ENCODE measurements at regions of chr3 and their contacts with region 1.

Region 1: DNA sequence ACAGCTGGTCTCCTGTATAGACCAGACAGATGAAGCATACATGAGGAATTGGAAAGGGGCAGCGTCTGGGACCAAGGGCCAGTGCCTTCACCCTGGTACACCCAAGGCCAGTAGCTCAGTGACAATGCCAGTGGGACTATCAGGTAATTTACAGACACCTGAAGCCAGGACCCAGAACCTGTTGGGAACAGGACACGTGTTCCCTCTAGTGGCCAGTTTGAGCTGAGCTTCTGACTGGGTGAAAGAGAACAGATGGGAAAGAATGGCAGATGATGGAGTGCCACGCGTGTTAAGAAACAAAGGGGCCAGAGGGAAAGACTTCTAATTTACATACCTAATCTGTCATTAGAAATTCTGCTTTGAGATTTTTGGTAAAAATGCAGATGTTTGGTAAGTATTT is 5.1 kb upstream of the SLC25A38 start:
- DNase-seq: peak; percentile 59 to 80 (median 66)
- ATAC-seq: peak; percentile 88
- H3K4me3 ChIP-seq: no peak overlapping the region
- H3K27ac ChIP-seq: no peak overlapping the region
- H3K4me1 ChIP-seq: peaks cover 0 to 4% of the 10 kb centered on the region in 2 experiments; a peak in 3 of 5 replicates
- H3K27me3 ChIP-seq: peaks cover 33 to 38% of the 10 kb centered on the region in 2 experiments
- CTCF ChIP-seq: peak; percentile 79 to 93 (median 87)
- EP300 ChIP-seq: no peak
- POLR2A ChIP-seq: no peak
- RAD21 ChIP-seq: peak; percentile 84 to 92

Region 2: DNA sequence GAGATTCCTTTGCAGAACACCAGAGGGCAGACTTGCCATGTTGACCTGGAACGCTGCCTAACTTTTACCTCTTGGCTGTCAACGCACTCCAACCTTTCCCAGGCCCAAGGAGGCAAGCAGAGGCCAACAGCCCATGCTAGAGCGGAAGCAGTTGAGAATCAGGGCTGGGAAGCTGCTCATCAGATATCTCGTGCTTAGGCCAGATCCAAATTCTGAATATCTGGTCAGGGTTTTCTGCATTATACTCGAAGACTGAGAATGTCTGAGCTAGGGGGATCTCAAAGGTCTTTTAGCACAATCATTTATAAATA is 188.2 kb before region 1 on chr3:
- CTCF ChIA-PET with region 1: interaction called, 10 read pairs
- POLR2A ChIA-PET with region 1: no interaction called
- in situ Hi-C with region 1: no loop called
- intact Hi-C with region 1: no loop called
- DNase-seq: peak; percentile 79 to 86 (median 80)
- ATAC-seq: peak; percentile 85
- H3K4me3 ChIP-seq: no peak overlapping the region
- H3K27ac ChIP-seq: no peak overlapping the region
- H3K4me1 ChIP-seq: peaks cover 0 to 26% of the 10 kb centered on the region in 2 experiments; a peak in 2 of 5 replicates
- H3K27me3 ChIP-seq: peaks cover 11 to 23% of the 10 kb centered on the region in 2 experiments; a peak in 4 of 5 replicates
- CTCF ChIP-seq: peak; percentile 89 to 94 (median 91)
- EP300 ChIP-seq: peak; percentile 43
- POLR2A ChIP-seq: no peak
- RAD21 ChIP-seq: peak; percentile 99 to 100

Region 3: GRCh38 chr3:39208463-39209055 is 169.5 kb before region 1 on chr3:
- CTCF ChIA-PET with region 1: no interaction called
- POLR2A ChIA-PET with region 1: no interaction called
- in situ Hi-C with region 1: no loop called
- intact Hi-C with region 1: loop called (anchors 5 kb)
- DNase-seq: peak; percentile 64 to 76 (median 70)
- ATAC-seq: peak; percentile 95
- H3K4me3 ChIP-seq: no peak overlapping the region
- H3K27ac ChIP-seq: no peak overlapping the region
- H3K4me1 ChIP-seq: no peaks in the 10 kb centered on the region
- H3K27me3 ChIP-seq: peaks cover 34 to 37% of the 10 kb centered on the region in 2 experiments
- CTCF ChIP-seq: peak; percentile 71 to 88 (median 81)
- EP300 ChIP-seq: no peak
- POLR2A ChIP-seq: no peak
- RAD21 ChIP-seq: peak; percentile 85 to 88